Activated CD4-positive, alpha-beta T cell treated with anti-CD3 and anti-CD28 coated beads, Interleukin-2, amount 10 ng/mL, durations not matched to agents 24 days and 14 days (primary cell): ENCODE measurements at regions of chr2 and their contacts with region 1.

Region 1: GRCh38 chr2:237512774-237513466 is 25.9 kb downstream of the MLPH start:
- DNase-seq: peak; percentile 91
- H3K4me3 Mint-ChIP-seq: no peak overlapping the region
- H3K27ac Mint-ChIP-seq: no peak overlapping the region
- H3K4me1 Mint-ChIP-seq: no peaks in the 10 kb centered on the region
- H3K27me3 Mint-ChIP-seq: peaks cover 2% of the 10 kb centered on the region

Region 2: DNA sequence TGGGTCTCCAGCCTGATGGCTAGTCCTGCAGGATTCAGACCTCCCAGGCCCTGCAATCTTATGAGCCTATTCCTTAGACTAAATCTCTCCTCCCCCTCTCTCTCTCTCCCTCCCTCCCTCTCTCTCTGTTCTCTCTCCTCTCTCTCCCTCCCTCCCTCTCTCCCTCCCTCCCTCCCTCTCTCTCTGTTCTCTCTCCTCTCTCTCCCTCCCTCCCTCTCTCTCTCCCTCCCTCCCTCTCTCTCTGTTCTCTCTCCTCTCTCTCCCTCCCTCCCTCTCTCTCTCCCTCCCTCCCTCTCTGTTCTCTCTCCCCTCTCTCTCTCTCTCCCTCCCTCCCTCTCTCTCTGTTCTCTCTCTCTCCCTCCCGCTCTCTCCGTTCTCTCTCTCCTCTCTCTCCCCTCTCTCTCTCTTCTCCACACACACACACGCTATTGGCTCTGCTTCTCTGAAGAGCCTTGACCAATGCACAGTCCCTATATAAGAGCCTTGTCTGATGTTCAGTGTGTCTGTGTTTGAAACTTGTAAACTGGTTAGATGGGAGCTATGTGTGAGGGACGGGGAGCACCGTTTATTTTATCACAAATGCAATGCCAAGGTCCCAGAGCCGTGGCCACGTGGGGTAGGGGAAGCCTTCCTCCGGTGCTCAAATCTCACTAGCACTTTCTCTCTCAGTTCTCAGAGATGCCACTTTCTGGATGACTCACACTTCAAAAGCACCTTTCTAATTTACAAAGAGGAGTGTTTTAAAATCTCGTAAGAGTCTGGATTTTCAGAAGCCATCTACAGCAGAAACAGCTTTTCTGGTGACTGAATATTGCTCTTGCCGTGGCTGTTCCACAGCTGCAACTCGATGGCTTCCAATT is 44.1 kb after region 1 on chr2:
- intact Hi-C with region 1: no loop called
- DNase-seq: peak; percentile 71
- H3K4me3 Mint-ChIP-seq: peak overlapping the region; percentile 5
- H3K27ac Mint-ChIP-seq: peak overlapping the region; percentile 61
- H3K4me1 Mint-ChIP-seq: peaks cover 11% of the 10 kb centered on the region
- H3K27me3 Mint-ChIP-seq: peaks cover 17% of the 10 kb centered on the region

Region 3: DNA sequence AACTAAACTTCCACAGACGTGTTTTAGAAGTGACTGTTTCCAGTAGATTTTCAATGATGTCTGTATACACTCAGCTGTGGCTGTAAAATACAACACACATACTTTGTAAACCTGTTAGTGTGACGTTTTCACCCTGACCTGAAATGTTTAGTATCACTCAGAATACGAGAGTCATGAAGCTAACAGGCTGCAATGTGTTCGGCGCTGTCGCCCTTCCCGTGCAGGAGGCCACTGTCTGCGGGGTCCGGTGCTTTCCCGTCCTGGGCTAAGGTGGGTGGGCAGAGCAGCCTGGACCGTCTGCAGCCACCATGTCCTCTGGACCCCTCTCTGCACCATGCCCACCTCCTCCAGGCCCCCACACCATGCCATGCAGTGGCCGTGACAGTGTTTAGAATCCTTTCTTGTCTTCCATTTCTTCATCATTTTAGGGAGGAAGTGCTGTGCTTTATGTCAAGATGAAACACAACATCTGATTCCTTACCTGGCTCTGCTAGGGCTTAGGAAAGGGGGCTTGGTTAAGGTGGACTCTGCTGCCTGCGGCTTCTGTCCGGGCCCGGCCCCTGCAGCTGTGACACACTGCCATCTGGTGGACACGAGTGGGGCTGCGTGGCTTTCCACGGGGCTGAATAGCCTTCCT is 231.8 kb after region 1 on chr2:
- intact Hi-C with region 1: loop called (anchors 10 kb)
- DNase-seq: peak; percentile 94
- H3K4me3 Mint-ChIP-seq: no peak overlapping the region
- H3K27ac Mint-ChIP-seq: peak overlapping the region; percentile 80
- H3K4me1 Mint-ChIP-seq: peaks cover 29% of the 10 kb centered on the region
- H3K27me3 Mint-ChIP-seq: no peaks in the 10 kb centered on the region